ENCODE measurements at regions of chr13 and their contacts with region 1.

Region 1: DNA sequence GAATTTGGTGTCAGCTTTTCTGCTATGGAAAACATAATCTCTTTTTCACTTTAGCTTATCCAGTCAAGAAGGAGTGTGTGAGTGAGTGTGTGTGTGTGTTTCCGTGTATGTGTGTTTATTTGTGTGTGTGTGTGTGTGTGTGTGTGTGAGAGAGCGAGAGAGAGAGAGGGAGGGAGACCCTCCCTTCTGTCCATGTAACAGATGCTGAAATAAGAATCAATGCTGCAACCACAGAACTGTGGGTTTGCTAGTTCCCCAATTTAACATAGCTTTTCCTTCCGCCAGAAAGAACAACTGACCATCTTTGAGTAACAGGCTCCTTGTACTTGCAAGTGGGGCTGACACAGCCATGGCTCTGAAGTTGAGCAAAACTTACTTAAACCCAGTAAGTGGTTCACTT is 5.2 kb downstream of the LCP1 start:
- DNase-seq: peak in 4 of 14 experiments; percentile 38 to 71 (median 60)
- ATAC-seq: no peak
- H3K4me3 ChIP-seq: peak overlapping the region; percentile 84
- H3K4me3 Mint-ChIP-seq: peak overlapping the region; percentile 72
- H3K27ac ChIP-seq: peak overlapping the region; percentile 58 to 75
- H3K27ac Mint-ChIP-seq: peak overlapping the region; percentile 98
- H3K4me1 ChIP-seq: peaks cover 46% of the 10 kb centered on the region
- H3K4me1 Mint-ChIP-seq: peaks cover 77% of the 10 kb centered on the region
- H3K27me3 ChIP-seq: no peaks in the 10 kb centered on the region
- H3K27me3 Mint-ChIP-seq: no peaks in the 10 kb centered on the region
- CTCF ChIP-seq: no peak

Region 2: DNA sequence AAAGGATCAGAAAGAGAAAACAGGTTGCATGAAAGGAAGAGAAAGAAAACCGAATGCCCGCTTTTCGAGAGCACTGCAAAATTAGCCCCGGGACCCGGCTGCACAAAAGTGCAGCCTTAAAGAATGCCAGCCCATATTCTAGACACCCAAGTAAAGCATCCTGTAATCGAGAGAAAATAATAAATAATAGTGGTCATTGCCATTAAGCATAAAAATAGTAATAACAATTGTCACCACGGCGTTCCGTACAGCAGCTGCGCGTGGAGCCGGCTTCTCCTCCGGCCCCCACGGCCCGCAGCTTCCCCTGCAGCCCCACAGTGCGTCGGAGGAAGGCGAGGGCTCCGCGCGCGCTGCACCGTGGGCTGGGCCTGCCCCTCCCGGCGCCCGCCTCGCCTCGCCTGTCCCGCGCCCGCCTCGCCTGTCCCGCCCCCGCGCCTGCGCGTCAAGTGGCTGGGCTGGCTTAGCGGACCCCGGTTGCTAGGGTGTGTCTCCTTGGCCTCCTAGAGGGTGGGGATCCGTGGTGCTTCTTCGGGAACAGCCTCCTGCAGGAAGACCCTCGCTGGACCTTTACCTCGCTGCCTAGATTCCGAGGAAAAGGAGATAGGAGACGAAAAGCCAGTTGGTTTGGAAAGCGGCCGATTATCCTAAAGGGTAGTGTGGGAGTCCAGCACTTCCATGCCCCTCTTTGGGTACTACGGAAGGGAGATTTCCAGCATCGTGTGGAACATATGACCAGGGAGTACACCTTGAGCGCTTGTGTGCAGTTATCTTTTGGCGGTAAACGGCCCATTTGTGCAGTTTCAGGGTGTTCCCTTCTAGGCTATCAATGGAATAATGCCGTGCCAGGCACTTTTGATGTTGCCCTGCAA is 35.0 kb after region 1 on chr13 and contains the start of gene LRRC63:
- CTCF ChIA-PET with region 1: interaction called, 3 read pairs
- POLR2A ChIA-PET with region 1: interaction called, 15 read pairs
- intact Hi-C with region 1: loop called in 1 of 2 experiments (anchors 1 kb)
- DNase-seq: peak; percentile 63 to 92 (median 80)
- ATAC-seq: peak; percentile 91
- H3K4me3 ChIP-seq: peak within 1 kb of the TSS; percentile 61
- H3K4me3 Mint-ChIP-seq: peak within 1 kb of the TSS; percentile 90
- H3K27ac ChIP-seq: peak within 1 kb of the TSS; percentile 54 to 78
- H3K27ac Mint-ChIP-seq: peak within 1 kb of the TSS; percentile 88
- H3K4me1 ChIP-seq: peaks cover 6% of the 10 kb centered on the region
- H3K4me1 Mint-ChIP-seq: peaks cover 22% of the 10 kb centered on the region
- H3K27me3 ChIP-seq: no peaks in the 10 kb centered on the region
- H3K27me3 Mint-ChIP-seq: no peaks in the 10 kb centered on the region
- CTCF ChIP-seq: no peak
- total RNA-seq, gene LRRC63: 0.17 TPM in 1 of 2 experiments, not detected in the other